Lower leg skin (tissue), 4 donors: ENCODE measurements at regions of chr1 and their contacts with region 1.

Region 1: DNA sequence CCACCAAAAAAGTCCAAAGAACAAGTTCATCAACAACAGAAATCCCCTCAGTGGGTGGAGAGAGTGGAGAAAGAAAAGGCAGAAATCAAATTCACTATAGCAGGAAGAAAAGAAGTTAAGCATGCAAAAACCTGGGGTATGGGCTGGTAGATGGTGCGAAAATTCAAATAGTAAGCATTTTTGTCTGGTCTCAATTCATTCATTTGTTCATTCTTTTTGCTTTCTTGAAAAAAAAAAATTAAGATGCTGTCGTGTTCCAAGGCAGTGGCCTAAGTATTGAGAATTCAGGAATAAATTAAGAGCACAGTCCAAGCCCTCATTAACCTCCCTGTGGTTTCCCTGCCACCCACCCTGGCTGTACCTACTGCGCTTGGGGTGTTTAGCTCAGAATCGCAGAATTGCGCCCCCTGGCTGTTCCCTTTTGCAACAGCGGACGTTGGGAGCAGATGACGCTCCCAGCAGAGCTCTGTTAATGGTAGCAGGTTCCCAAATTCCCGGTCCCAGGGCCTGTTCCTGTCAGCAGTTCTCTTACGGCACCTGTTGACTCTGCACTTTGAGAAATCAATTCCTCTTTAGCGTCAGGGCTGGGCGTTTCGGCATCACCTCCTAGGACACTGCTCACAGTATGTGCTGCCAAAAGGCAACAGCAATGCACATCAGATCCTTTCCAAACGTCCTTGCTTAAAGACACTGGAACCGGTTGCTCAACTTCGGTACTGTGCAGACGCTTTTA is 34.0 kb upstream of the SSX2IP start:
- DNase-seq: no peak
- H3K4me3 ChIP-seq: no peak overlapping the region
- CTCF ChIP-seq: no peak
- POLR2A ChIP-seq: no peak

Region 2: DNA sequence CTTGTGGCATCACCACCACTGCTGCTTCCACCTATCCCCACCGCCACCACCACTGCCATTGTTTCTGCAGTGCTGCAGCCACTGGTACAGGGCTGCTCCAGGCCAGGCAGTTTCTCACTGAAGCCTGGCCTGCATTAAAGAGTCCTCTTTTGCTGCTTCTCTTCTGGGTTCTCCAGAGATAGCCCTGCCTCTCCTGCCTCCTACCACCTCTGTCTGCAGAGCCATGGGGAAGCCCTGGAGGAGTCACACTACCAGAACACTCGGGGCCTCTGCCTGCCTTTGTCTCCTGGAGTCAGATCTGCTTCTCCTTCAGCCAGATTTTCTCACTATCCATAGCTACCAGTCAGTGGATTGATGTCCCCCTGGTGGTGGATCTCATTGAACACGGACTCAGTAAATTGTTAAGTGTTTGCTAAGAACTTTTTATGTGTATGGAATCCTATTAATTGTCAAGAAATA is 778.4 kb after region 1 on chr1:
- intact Hi-C with region 1: loop called (anchors 5 kb)
- DNase-seq: peak in 1 of 2 donors; percentile 50
- H3K4me3 ChIP-seq: no peak overlapping the region
- CTCF ChIP-seq: no peak
- POLR2A ChIP-seq: no peak